ENCODE measurements at regions of chr21 and their contacts with region 1.

Region 1: GRCh38 chr21:41858466-41859296 is 20.5 kb downstream of the PRDM15 start:
- DNase-seq: no peak
- H3K4me3 ChIP-seq: no peak overlapping the region
- CTCF ChIP-seq: no peak
- POLR2A ChIP-seq: no peak

Region 2: DNA sequence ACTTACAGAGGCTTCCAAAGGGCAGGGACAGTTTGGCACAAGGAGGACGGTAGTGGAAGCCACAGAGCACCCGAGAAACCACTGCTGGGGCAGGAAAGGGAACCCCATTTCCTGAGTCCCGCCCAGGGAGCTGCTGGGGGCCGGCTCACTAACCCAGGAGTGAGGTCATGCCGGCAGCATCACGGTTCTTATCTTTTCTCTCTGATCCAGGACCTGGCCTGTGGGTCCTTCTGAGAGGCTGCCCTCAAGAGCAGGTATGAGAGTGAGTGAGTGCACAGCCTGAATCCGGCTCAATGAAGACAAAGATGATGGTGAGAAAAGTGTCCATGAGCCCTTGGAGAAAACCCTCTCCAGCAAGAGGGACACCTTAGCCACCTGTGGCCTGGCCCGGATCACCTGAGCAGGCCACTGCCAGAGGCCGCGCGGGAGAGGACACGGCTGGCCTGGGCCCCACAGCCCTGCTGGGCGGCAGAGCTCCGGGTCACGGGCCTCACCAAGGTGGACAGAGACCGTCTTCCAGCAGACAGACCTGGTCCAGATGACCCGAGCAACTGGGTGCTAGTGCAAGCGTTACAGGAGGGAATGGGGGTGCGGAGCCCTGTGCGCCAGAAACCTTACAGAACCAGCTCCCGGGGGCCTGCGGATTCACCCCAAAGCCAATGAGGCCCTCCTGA is 186.7 kb before region 1 on chr21:
- intact Hi-C with region 1: no loop called
- DNase-seq: peak in 1 of 2 donors; percentile 80
- H3K4me3 ChIP-seq: no peak overlapping the region
- CTCF ChIP-seq: no peak
- POLR2A ChIP-seq: no peak

Region 3: GRCh38 chr21:41897690-41898089 is 39.0 kb after region 1 on chr21:
- intact Hi-C with region 1: loop called (anchors 1 kb)
- DNase-seq: no peak
- H3K4me3 ChIP-seq: no peak overlapping the region
- CTCF ChIP-seq: no peak
- POLR2A ChIP-seq: no peak

Measured in lower leg skin (tissue), 4 donors.